BJ (cell line): ENCODE measurements at regions of chr1 and their contacts with region 1.

Region 1: DNA sequence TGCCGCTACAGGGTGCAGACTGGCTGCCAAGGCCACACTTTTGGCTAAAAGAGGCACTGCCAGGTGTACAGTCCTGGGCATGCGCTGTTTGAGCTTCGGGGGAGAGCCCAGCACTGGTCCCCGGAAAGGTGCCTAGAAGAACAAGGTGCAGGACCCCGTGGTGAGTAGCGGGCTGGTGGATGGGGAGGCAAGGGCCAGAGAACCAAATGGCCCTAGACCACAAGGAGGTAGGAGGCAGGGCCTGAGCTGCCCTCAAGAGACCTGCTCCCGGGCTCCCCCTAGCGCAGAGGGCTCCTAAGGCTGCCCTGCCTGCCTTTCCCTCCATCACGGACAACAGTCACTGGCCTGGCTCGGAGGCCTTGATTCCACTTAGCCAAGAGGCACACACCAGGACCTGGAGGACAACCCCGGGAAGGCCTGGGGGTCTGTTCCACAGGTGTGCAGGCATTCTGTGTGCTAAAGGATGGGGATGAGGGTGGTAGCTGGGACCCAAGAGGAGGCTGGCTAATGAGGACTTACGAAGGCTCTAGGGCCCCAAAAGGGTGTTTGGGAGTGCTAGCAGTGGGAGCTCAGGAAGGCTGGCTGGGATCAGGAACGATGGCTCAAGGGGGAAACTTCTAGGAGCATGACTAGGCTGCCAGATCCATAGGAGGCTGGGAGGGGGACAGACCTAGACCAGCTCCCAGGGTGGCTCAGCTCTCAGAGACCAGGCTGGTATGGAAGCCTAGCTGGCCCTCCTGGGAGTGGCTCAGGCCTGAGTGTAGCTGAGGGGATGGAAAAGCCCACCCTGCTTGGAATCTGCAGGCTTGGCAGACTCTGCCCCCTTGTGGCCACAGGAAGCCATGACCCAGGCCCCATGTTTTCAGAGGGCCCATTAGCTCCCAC is 742 bp downstream of the ARTN start:
- DNase-seq: no peak
- H3K4me3 ChIP-seq: no peak overlapping the region
- H3K27me3 ChIP-seq: no peaks in the 10 kb centered on the region
- CTCF ChIP-seq: peak; percentile 96

Region 2: DNA sequence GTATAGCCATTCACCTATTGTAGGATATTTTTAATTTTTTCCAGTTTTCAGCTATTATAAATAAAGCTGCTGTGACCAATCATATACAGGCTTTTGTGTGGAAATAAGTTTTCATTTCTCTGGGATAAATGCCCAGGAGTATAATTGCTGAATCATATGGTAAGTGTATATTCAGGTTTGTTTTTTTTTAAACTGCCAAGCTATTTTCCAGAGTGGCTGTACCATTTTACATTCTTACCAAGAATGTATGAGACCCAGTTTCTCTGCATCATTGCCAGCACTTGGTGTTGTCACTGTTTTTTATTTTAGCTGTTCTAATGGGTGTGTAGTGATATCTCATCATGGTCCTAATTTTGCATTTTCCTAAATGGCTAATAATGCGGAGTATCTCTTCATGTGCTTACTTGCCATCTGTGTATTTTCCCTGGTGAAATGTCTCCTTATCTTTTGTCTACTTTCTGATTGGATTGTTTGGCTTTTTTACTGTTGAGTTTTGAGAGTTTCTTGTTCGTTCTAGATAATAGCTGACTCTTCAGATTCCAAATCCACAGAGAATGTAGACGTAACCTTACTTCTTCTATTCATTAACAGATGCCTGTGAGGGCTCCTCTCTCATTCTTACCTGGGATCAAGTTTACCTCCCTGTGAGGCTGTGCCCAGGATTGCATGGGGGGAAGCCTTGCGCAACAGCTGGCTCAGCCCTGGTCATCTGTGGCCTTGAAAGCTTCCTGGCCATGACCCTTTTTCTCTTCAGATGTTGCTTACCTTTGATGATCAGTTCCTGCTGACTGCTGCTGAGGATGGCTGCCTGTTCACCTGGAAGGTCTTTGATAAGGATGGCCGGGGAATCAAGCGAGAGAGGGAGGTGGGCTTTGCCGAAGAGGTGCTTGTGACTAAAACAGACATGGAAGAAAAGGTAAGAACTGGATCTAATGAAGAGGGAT is 719.6 kb before region 1 on chr1:
- CTCF ChIA-PET with region 1: no interaction called
- POLR2A ChIA-PET with region 1: no interaction called
- DNase-seq: no peak
- H3K4me3 ChIP-seq: no peak overlapping the region
- H3K27me3 ChIP-seq: no peaks in the 10 kb centered on the region
- CTCF ChIP-seq: no peak

Region 3: GRCh38 chr1:43529206-43529731 is 405.1 kb before region 1 on chr1:
- CTCF ChIA-PET with region 1: interaction called, 14 read pairs
- POLR2A ChIA-PET with region 1: no interaction called
- DNase-seq: peak; percentile 48
- H3K4me3 ChIP-seq: no peak overlapping the region
- H3K27me3 ChIP-seq: no peaks in the 10 kb centered on the region
- CTCF ChIP-seq: peak; percentile 92

Region 4: DNA sequence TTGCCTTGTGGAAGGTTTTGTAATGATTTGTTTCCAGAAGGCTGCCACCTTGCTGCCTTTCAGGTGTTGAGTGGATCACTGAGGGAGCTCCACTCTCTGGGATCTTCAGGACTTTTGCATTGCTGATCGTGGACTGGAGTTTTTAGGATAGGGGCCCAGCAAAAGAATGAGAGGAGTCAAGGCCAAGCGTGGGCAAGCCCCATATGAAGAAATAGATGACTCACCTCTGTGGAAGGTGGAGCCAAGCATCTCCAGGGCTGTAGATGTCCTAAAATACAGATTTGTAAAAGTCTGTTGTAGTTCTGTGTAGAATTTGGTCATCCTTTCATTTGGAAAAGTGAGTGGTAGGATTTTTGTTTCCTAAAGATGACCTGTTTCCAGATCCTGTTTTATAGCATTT is 160.0 kb before region 1 on chr1:
- CTCF ChIA-PET with region 1: interaction called, 365 read pairs
- POLR2A ChIA-PET with region 1: no interaction called
- DNase-seq: no peak
- H3K4me3 ChIP-seq: no peak overlapping the region
- H3K27me3 ChIP-seq: no peaks in the 10 kb centered on the region
- CTCF ChIP-seq: no peak

Region 5: GRCh38 chr1:43835082-43836021 is 99.0 kb before region 1 on chr1:
- CTCF ChIA-PET with region 1: interaction called, 11 read pairs
- POLR2A ChIA-PET with region 1: no interaction called
- DNase-seq: peak; percentile 89
- H3K4me3 ChIP-seq: no peak overlapping the region
- H3K27me3 ChIP-seq: no peaks in the 10 kb centered on the region
- CTCF ChIP-seq: no peak

Region 6: DNA sequence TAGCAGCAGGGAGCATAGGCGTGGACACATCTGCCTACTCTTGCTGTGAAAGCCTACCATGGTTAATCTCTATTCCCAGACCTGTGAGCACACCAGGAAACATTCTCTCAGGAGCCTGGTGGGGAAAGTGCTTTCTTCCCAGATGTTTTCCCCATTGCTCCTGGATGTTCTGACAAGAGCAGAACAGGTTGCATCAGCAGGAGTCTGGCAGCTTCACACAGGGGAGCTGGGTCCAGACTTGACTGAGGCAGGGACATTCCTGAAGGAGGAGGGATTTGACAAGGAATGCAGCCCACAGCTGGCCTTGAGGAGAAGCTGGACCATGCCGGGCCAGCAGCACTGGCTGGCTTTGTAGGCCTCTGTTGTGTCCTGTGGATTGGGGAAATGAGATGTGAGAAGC is 21.7 kb before region 1 on chr1:
- CTCF ChIA-PET with region 1: interaction called, 30 read pairs
- POLR2A ChIA-PET with region 1: no interaction called
- DNase-seq: peak; percentile 47
- H3K4me3 ChIP-seq: no peak overlapping the region
- H3K27me3 ChIP-seq: no peaks in the 10 kb centered on the region
- CTCF ChIP-seq: no peak

Region 7: GRCh38 chr1:44049839-44050238 is 115.5 kb after region 1 on chr1:
- CTCF ChIA-PET with region 1: interaction called, 10 read pairs
- POLR2A ChIA-PET with region 1: no interaction called
- DNase-seq: peak; percentile 87
- H3K4me3 ChIP-seq: no peak overlapping the region
- H3K27me3 ChIP-seq: no peaks in the 10 kb centered on the region
- CTCF ChIP-seq: no peak